ENCODE measurements at regions of chr19 and their contacts with region 1.

Region 1: DNA sequence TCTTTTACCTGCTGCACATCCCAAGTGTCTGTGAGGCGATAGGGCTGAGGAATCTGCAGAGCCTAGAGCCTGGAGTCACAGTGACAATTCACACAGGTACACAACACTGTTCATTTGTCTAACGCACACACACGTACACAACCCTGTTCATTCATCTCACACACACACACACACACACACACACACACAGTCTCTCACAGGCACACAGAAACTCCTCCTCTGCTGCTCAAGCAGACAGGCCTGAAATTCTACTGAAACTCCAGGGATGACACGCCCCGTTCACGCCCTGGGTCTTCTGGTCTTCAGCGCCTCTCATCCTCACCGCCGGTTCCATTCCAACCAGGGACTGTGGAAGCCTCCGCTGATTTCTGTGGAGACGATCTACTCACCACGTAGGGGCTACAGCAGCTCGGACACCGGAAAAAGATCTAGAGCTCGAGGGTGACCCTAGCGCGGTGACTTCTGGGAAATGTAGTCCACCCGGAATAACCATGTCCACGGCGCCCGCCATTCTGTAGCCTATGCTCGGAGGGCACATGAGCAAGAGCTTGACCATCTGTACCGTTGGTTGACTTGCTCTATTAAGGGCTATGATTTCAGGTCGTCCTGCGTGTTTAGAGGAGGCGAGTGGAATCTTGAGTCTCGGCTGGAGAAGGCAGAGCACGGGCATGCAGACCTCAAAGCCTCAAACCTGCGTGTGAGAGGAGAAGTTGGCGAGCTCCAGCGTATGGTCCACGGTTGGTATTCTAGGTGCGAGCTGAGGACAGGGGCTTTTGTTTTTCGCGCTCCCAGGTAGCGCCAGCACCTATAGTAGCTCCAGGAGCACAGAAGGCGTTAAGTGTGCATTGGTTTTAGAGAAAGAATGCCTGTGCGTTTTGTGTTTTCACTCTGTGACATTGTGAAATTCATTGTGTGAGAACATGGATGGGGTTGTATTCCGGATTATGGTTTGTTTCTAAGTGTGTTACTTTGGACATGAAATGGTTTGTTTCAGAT is 33.4 kb downstream of the ZNF45 start:
- DNase-seq: peak; percentile 93

Region 2: GRCh38 chr19:43855616-43856015 is 46.1 kb before region 1 on chr19:
- intact Hi-C with region 1: no loop called
- DNase-seq: no peak

Region 3: DNA sequence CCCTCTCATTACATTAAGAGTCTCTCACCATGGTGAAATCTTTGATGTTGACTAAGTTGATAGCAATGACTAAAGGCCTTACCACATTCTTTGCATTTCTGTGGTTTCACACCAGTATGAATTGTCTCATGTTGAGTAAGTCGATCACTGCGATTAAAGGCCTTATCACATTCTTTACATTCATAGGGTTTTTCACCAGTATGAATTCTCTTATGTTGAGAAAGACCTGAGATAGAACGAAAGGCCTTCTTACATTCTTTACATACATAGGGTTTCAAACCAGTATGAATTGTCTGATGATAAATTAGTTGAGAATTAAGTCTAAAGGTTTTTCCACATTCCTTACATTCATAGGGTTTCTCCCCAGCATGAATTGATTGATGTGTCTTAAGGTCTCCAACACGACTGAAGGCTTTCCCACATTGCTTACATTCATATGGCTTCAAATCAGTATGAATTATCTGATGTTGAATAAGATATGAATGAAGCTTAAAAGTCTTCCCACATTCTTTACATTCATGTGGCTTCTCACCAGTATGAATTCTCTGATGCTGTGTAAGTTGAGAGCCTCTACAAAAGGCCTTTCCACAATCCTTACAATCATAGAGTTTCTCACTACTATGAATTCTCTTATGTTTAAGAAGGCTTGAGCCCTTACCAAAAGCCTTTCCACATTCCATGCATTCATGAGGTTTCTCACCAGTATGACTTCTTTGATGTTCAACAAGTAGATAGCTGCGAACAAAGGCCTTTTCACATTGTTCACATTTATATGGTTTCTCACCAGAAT is 29.0 kb before region 1 on chr19:
- intact Hi-C with region 1: no loop called
- DNase-seq: no peak

Region 4: GRCh38 chr19:43934985-43935708 is 33.5 kb after region 1 on chr19 and contains the start of gene ZNF45:
- intact Hi-C with region 1: loop called (anchors 2 kb)
- DNase-seq: peak; percentile 96
- total RNA-seq, gene ZNF45: 7.0 TPM

Measured in cardiac septum (tissue), 1 donor.